Posterior vena cava (tissue), 2 donors: ENCODE measurements at regions of chr9 and their contacts with region 1.

Region 1: GRCh38 chr9:126317513-126317912 is 9.1 kb upstream of the MVB12B start:
- DNase-seq: no peak

Region 2: DNA sequence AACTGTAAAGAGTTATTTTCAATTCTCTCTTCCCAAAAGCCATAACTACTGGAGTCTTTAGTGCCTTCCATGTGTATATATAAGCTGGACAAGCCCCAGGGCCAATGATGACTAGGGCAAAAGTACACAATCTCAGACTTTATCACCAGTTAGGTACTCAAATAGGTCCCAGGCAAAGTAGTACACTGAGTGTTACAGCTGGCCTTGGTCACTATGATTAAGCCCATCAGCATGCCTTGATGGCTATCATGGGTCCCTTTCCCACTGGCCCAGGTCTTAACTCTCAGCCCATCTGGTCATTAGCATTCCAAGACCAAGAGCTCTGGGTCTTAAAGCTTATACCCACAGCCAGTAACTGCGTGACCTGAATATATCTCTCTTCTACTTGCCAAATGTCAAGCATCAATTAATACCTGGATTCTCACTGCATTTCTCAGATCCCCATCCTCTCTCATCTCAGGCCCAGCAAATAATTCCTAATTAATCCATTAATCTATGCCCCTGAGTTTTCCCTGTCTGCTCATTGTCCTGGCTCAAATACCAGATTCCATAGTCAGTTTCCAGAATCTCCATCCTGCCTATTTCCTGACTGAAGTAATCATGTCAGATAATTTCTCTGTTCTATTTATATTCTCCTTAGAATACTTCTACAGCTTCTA is 1608.8 kb before region 1 on chr9:
- intact Hi-C with region 1: loop called in 1 of 2 experiments (anchors 10 kb)
- DNase-seq: no peak

Region 3: GRCh38 chr9:126379661-126380360 is 62.3 kb after region 1 on chr9:
- intact Hi-C with region 1: no loop called
- DNase-seq: peak; percentile 52